ENCODE measurements at regions of chr1 and their contacts with region 1.

Region 1: GRCh38 chr1:184664042-184664655 is 90.5 kb downstream of the EDEM3 start:
- H3K4me3 ChIP-seq: peak overlapping the region; percentile 29
- H3K27ac ChIP-seq: no peak overlapping the region
- H3K4me1 ChIP-seq: no peaks in the 10 kb centered on the region
- CTCF ChIP-seq: peak; percentile 83

Region 2: GRCh38 chr1:184075055-184076029 is 588.8 kb before region 1 on chr1:
- CTCF ChIA-PET with region 1: interaction called, 12 read pairs
- POLR2A ChIA-PET with region 1: interaction called, 3 read pairs
- H3K4me3 ChIP-seq: no peak overlapping the region
- H3K27ac ChIP-seq: no peak overlapping the region
- H3K4me1 ChIP-seq: no peaks in the 10 kb centered on the region
- CTCF ChIP-seq: peak; percentile 27; the same call in 1 of the 2 replicates

Region 3: DNA sequence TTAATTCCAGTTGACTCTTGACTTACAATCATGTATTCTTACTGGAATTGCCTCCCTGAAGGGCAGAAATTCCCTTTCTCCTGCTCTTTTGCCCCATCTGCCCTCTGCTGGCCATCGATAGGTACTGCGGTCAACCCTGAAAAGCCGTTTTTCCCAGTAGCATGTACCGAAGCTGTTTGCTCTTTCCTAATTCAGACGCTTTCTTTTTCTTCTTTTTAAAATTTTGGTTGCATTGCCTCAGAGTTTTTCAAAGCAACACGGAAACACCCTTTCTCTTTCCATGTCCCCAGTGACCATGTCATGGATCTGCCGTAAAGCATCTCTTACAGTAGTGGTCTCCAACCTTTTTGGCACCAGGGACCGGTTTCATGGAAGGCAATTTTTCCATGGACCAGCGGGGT is 441.5 kb before region 1 on chr1:
- CTCF ChIA-PET with region 1: interaction called, 10 read pairs
- POLR2A ChIA-PET with region 1: no interaction called
- H3K4me3 ChIP-seq: peak overlapping the region; percentile 16; the same call in 1 of the 2 replicates
- H3K27ac ChIP-seq: no peak overlapping the region
- H3K4me1 ChIP-seq: no peaks in the 10 kb centered on the region
- CTCF ChIP-seq: peak; percentile 87

Region 4: GRCh38 chr1:184380468-184380867 is 283.7 kb before region 1 on chr1:
- CTCF ChIA-PET with region 1: interaction called, 12 read pairs
- POLR2A ChIA-PET with region 1: no interaction called
- H3K4me3 ChIP-seq: no peak overlapping the region
- H3K27ac ChIP-seq: no peak overlapping the region
- H3K4me1 ChIP-seq: no peaks in the 10 kb centered on the region
- CTCF ChIP-seq: no peak

Region 5: DNA sequence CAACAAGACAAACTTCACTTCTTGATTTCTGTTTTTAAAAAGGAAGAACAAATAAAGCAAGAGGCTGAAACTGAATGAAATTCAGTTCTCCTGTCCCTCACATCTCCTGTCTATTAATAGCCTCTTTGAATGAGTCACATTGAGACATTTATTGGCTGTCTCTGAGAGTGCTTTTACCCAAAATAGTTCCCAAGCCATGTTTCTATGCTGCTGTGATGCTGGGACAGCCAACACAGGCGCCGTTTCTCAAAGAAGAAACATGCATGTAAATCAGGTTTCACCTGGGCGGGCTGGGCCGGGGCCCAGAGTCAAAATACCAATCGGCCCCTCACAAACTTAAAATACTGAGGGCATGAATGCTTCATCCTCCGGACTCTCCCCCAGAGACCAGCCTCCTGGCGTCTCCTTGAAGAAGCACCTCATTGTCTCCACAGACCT is 14.7 kb before region 1 on chr1:
- CTCF ChIA-PET with region 1: interaction called, 16 read pairs
- POLR2A ChIA-PET with region 1: no interaction called
- H3K4me3 ChIP-seq: no peak overlapping the region
- H3K27ac ChIP-seq: no peak overlapping the region
- H3K4me1 ChIP-seq: no peaks in the 10 kb centered on the region
- CTCF ChIP-seq: no peak

Region 6: DNA sequence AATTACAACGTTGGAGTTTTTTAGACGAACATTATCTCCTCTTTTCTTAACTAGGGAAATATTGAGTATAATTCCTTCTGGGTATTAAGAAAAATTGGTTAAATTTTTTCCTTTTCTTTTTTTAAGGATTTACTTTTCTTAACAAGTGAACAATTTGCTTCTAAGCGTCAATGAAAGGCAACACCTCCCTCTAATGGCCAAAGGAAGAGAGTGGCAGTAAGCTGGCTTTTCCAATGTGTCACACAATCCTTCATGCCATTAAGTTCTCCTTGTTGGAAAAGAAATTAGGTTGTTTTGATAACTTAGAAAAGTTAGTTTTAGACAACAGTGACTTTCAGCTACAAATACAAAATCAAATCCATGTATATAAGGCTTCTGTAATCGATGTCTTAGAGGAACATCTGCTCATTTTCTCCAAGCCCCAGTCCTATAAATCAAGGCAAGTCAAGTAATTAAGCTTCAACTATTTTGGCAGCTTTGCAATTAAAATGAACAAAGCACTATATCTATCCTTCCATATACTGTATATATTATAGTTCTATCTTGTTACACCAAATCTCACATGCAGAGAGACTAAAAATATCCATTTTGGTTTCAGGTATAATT is 27.7 kb after region 1 on chr1:
- CTCF ChIA-PET with region 1: interaction called, 24 read pairs
- POLR2A ChIA-PET with region 1: no interaction called
- H3K4me3 ChIP-seq: no peak overlapping the region
- H3K27ac ChIP-seq: no peak overlapping the region
- H3K4me1 ChIP-seq: no peaks in the 10 kb centered on the region
- CTCF ChIP-seq: peak; percentile 54; the same call in 1 of the 2 replicates

Measured in HEK293 (cell line).